ENCODE measurements at regions of chr2 and their contacts with region 1.

Region 1: GRCh38 chr2:62202019-62202722 is 6.3 kb downstream of the B3GNT2 start:
- DNase-seq: no peak
- ATAC-seq: no peak
- H3K4me3 Mint-ChIP-seq: peak overlapping the region; percentile 3
- H3K27ac Mint-ChIP-seq: peak overlapping the region; percentile 97
- H3K4me1 Mint-ChIP-seq: peaks cover 87% of the 10 kb centered on the region
- H3K27me3 Mint-ChIP-seq: no peaks in the 10 kb centered on the region

Region 2: GRCh38 chr2:62038975-62039771 is 163.0 kb before region 1 on chr2:
- CTCF ChIA-PET with region 1: no interaction called
- POLR2A ChIA-PET with region 1: no interaction called
- intact Hi-C with region 1: loop called in 1 of 2 experiments (anchors 10 kb)
- DNase-seq: peak; percentile 53
- ATAC-seq: peak; percentile 97
- H3K4me3 Mint-ChIP-seq: no peak overlapping the region
- H3K27ac Mint-ChIP-seq: peak overlapping the region; percentile 81
- H3K4me1 Mint-ChIP-seq: peaks cover 16% of the 10 kb centered on the region
- H3K27me3 Mint-ChIP-seq: no peaks in the 10 kb centered on the region

Region 3: GRCh38 chr2:62215316-62216064 is 13.3 kb after region 1 on chr2:
- CTCF ChIA-PET with region 1: interaction called, 11 read pairs
- POLR2A ChIA-PET with region 1: interaction called, 4 read pairs
- intact Hi-C with region 1: no loop called
- DNase-seq: no peak
- ATAC-seq: no peak
- H3K4me3 Mint-ChIP-seq: no peak overlapping the region
- H3K27ac Mint-ChIP-seq: peak overlapping the region; percentile 43
- H3K4me1 Mint-ChIP-seq: peaks cover 84% of the 10 kb centered on the region
- H3K27me3 Mint-ChIP-seq: no peaks in the 10 kb centered on the region

Region 4: DNA sequence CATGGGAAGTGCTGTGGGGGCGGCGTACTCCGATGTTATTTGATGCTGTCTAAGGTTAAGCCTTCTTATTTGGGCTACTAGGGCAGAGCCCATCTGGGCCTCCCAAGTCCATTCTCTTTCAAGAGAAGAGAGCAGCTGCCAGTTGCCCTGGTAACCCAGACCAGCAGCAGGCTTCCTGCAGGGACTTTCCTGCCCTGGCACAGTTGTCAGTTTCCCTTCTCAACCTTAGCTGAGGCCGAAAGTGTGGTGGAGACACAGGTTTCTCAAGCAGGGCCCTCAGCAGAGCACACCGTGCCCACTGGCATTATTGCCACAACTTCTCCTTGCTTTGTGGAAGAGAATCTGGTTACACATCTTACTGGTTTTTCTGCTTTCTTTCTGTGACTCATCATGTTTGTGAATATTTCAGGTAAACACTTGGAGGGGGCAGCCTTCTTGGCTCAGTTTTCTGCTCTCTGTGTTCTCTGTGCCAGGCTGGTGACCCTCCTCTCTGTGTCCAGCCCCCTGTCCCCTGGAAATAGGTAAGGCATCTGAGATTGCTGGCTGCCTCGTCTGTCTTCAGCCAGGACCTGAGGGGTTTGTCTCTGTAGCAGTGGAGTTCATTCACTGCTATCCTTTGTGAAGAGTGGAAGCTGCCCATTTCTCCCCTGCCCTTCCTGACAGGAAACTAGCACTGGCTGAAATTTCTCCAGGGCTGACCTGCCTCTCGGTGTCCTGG is 104.7 kb after region 1 on chr2:
- CTCF ChIA-PET with region 1: no interaction called
- POLR2A ChIA-PET with region 1: interaction called, 9 read pairs
- intact Hi-C with region 1: loop called (anchors 1 kb)
- DNase-seq: peak; percentile 69
- ATAC-seq: peak; percentile 20
- H3K4me3 Mint-ChIP-seq: no peak overlapping the region
- H3K27ac Mint-ChIP-seq: peak overlapping the region; percentile 79
- H3K4me1 Mint-ChIP-seq: peaks cover 72% of the 10 kb centered on the region
- H3K27me3 Mint-ChIP-seq: no peaks in the 10 kb centered on the region

Region 5: DNA sequence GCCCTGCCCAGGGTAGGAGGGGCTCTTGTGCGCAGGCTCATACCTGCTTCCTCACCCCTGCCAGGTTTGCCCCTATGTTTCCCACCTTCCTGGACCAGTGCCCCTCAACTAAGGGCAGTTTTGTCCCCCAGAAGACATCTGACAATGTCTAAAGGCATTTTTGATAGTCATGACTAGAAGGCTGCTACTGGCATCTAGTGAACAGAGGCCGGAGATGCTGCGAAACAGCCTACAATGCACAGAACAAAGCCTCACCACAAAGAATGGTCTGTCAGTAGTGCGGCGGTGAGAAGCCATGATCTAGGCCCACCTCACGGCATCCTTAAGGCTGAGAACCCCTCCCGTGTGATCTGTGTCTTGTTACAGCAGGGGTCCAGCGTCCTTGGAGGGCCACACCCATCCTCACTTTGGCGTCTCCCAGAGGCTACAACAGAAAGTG is 207.9 kb after region 1 on chr2:
- CTCF ChIA-PET with region 1: interaction called, 4 read pairs
- POLR2A ChIA-PET with region 1: no interaction called
- intact Hi-C with region 1: loop called (anchors 2 to 5 kb)
- DNase-seq: no peak
- ATAC-seq: no peak
- H3K4me3 Mint-ChIP-seq: no peak overlapping the region
- H3K27ac Mint-ChIP-seq: no peak overlapping the region
- H3K4me1 Mint-ChIP-seq: peaks cover 4% of the 10 kb centered on the region
- H3K27me3 Mint-ChIP-seq: no peaks in the 10 kb centered on the region

Measured in activated CD4-positive, alpha-beta T cell treated with anti-CD3 and anti-CD28 coated beads for 36 hours (primary cell).